Activated CD4-positive, alpha-beta T cell treated with anti-CD3 and anti-CD28 coated beads, Interleukin-2, amount 10 ng/mL, durations not matched to agents 24 days and 14 days (primary cell): ENCODE measurements at regions of chr7 and their contacts with region 1.

Region 1: GRCh38 chr7:64183126-64183742 is 23.8 kb upstream of the ZNF735 start:
- DNase-seq: peak; percentile 66
- H3K4me3 Mint-ChIP-seq: no peak overlapping the region
- H3K27ac Mint-ChIP-seq: no peak overlapping the region
- H3K4me1 Mint-ChIP-seq: no peaks in the 10 kb centered on the region
- H3K27me3 Mint-ChIP-seq: no peaks in the 10 kb centered on the region

Region 2: DNA sequence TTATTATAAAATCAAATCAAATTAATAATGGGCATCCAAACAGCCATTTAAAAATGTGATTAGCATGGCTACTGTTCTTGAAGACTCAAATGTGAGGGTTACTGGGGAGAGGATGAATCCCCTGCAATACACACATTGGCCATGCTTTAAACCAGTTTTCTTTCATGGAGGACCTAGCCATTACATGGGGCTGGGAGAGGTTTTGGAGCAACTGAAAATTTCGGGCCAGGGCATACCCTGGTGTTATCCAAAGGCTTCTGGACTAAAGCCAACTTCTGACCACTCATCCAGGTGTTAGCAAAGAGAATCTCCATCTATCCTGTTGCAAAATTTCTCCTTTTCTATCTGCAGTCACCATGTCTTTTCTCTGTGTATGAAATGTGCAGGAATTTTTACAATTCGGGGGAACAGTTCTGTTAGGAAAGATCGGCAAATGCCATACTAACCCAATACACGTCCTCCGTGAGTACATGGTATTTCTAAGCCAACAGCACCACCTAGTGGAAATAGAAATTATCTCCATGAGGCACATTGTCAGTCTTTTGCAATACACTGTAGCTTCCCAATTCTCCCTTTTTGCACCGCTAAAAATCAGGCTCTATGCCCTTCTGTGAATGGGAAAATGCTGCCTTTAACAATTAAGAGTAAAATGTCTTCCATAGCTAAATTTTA is 435.7 kb after region 1 on chr7:
- intact Hi-C with region 1: loop called (anchors 2 kb)
- DNase-seq: peak; percentile 73
- H3K4me3 Mint-ChIP-seq: no peak overlapping the region
- H3K27ac Mint-ChIP-seq: no peak overlapping the region
- H3K4me1 Mint-ChIP-seq: no peaks in the 10 kb centered on the region
- H3K27me3 Mint-ChIP-seq: no peaks in the 10 kb centered on the region